Right ventricle myocardium superior (tissue), 1 donor: ENCODE measurements at regions of chr5 and their contacts with region 1.

Region 1: DNA sequence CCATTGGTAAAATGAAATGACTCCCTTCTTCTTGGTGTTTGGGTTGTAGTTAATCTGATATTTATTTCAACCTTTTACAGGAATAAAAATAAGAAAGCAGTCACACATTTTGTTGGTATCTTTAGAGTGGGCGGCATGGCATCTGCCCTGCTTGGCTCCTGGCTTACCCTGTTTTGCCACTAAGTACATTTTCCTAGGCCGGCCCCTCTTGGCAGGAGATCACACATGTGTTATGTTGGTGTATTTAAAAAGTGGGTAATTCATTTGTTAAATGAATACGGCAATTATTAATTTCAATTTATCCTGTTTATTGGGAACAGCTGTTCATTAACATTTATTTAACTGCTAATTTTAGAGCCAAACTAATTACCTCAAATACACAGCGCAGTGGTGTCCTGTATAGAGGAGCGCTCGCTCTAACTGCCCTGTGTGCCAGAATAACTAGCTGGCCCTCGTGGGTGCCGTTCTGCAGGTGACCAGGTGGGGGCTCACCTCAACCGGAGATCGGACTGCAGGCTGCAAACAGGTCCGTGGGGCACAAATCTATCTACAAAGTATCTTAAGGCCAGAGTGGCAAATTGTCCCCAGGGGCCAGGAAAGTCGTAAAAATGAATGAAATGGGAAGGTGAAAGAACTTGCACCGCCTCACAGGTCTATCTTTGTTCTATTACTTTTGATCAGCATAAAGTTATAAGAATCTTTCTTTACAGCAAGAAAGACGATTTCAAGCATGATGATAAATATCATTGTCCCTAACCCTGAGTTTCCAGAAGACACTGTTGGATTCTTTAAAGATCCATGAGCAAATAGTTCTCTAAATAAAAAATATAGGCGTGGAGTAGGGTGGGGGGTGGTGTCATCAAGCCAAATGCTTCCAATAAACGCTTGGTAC is 26.2 kb upstream of the GPR151 start:
- DNase-seq: peak; percentile 77
- ATAC-seq: peak; percentile 91

Region 2: GRCh38 chr5:147188200-147189108 is 646.2 kb after region 1 on chr5:
- intact Hi-C with region 1: loop called (anchors 5 kb)
- DNase-seq: no peak
- ATAC-seq: peak; percentile 78